Endothelial cell of umbilical vein (primary cell): ENCODE measurements at regions of chr9 and their contacts with region 1.

Region 1: DNA sequence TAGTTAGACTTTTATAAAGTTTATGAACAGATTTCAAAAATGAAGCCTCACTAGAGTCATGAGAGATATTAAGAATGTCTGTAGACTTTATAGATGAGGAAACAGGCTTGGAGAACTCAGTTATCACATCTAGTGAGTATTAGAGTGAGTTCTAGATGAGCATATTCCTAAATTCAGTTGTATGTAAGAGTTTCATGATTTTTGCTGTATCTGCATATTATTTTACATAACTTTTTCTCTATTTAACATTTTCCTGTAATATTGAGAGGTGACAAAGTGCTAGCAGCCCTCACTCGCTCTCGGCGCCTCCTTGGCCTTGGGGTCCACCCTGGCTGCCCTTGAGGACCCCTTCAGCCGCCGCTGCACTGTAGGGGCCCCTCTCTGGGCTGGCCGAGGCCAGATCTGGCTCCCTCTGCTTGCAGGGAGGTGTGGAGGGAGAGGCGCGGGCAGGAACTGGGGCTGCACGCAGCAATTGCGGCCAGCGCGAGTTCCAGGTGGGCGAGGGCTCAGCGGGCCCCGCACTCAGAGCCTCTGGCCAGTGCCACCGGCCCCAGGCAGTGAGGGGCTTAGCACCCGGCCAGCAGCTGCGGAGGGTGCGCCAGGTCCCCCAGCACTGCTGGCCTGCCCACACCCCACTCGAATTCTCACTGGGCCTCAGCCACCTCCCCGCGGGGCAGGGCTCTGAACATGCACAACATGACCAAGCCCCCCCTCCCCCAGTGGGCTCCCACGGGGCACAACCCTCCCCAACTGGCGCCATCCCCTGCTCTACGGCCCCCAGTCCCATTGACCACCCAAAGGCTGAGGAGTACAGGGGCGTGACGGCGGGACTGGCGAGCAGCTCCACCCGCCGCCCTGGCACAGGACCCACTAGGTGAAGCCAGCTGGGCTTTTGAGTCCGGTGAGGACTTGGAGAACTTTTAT is 182.1 kb downstream of the TLE1 start:
- DNase-seq: no peak
- H3K4me3 ChIP-seq: no peak overlapping the region
- H3K27ac ChIP-seq: no peak overlapping the region
- H3K4me1 ChIP-seq: no peaks in the 10 kb centered on the region
- H3K27me3 ChIP-seq: no peaks in the 10 kb centered on the region
- CTCF ChIP-seq: no peak
- POLR2A ChIP-seq: no peak

Region 2: DNA sequence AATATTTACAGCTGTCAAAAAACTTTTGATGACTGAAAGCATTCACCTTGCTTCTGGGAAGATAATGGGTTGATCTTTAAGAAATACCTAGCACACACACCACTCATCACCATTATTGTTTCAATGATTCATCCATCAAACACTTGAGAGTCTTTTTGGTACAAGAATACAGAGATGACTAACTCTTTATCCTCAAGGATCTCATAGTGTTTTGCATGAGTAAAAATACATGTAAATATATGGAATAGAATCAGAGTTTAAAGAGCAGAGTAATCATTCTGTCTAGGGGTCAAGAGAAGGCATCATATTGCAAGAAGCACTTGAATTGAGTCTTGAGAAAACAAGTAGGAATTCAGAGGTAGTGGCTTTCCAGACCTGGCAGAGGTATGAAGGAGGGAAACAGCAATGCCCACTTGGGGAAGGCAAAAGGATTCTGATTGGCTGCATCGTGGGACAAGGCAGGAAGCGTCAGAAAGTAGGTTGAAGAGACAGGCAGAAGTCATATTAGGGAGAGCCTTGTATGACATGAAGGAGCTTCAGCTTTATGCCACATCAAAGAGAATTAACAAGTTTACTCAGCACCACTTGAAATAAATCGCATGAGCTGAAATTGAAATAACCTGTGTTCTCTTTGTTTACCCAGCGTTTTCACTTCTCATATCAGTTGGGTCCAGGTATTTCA is 360.4 kb before region 1 on chr9:
- CTCF ChIA-PET with region 1: no interaction called
- POLR2A ChIA-PET with region 1: no interaction called
- dilution Hi-C with region 1: no loop called
- intact Hi-C with region 1: no loop called
- DNase-seq: no peak
- H3K4me3 ChIP-seq: no peak overlapping the region
- H3K27ac ChIP-seq: no peak overlapping the region
- H3K4me1 ChIP-seq: no peaks in the 10 kb centered on the region
- H3K27me3 ChIP-seq: no peaks in the 10 kb centered on the region
- CTCF ChIP-seq: no peak
- POLR2A ChIP-seq: no peak

Region 3: GRCh38 chr9:81953096-81953495 is 445.9 kb after region 1 on chr9:
- CTCF ChIA-PET with region 1: no interaction called
- POLR2A ChIA-PET with region 1: no interaction called
- dilution Hi-C with region 1: no loop called
- intact Hi-C with region 1: loop called (anchors 10 kb)
- DNase-seq: no peak
- H3K4me3 ChIP-seq: no peak overlapping the region
- H3K27ac ChIP-seq: no peak overlapping the region
- H3K4me1 ChIP-seq: no peaks in the 10 kb centered on the region
- H3K27me3 ChIP-seq: no peaks in the 10 kb centered on the region
- CTCF ChIP-seq: no peak
- POLR2A ChIP-seq: no peak